Pancreas (tissue), 10 donors: ENCODE measurements at regions of chr7 and their contacts with region 1.

Region 1: DNA sequence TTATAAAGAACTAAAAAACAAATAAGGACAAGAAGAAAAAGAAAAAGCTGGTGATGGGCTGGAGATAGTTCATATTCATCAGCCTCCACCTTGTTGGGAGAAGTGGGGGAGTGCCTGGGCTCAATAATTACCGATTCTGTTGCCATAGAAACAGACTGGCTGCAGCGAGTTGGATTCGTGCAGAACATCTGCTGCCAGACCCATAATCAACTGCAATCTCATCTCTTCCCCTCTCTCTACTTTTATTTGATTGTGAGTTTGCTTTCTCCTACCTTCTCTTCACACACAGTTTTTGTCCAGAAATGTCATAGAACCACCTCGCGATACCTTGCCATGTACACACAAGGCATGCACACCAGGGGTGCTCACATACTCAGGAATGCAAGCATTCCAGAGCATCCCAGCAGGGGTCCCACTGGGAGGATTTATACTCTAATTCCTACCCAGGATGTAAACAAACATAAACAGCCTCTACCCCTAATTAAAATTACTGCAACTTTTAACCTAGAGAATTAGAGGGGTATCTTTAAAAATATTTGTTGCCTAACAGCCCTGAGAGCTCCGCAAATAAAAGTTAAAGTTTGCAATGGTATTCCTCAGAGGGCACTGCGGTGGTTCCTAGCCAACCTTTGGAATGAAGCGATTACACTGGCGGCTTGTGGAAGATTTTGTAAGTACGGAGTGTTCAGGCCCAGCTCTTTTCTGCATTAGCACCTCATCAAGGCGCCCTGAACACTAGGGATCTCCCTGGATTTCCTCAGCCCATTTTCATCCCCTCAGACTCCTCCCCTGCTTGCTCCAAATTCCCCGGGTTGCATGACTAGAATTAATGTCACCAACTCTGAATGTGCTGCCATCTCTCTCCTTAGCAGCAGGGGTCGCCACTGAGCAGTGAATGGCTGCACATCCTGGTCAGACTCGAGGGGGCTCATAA is 262.4 kb upstream of the AOAH start:
- DNase-seq: peak; percentile 47 to 85 (median 68)
- ATAC-seq: peak; percentile 65 to 95 (median 88)
- H3K4me3 ChIP-seq: peak overlapping the region in 1 of 4 donors; percentile 17
- H3K27ac ChIP-seq: no peak overlapping the region
- H3K4me1 ChIP-seq: peaks cover 0 to 3% (median 0%) of the 10 kb centered on the region in 3 donors
- H3K27me3 ChIP-seq: no peaks in the 10 kb centered on the region
- CTCF ChIP-seq: peak; percentile 56 to 73 (median 69)

Region 2: GRCh38 chr7:37181550-37181932 is 194.8 kb after region 1 on chr7:
- intact Hi-C with region 1: loop called (anchors 5 to 10 kb)
- DNase-seq: no peak
- ATAC-seq: peak in 2 of 4 donors; percentile 6 to 14
- H3K4me3 ChIP-seq: no peak overlapping the region
- H3K27ac ChIP-seq: no peak overlapping the region
- H3K4me1 ChIP-seq: peaks cover 0 to 6% (median 2%) of the 10 kb centered on the region in 3 donors
- H3K27me3 ChIP-seq: no peaks in the 10 kb centered on the region
- CTCF ChIP-seq: no peak